IMR-90 (cell line): ENCODE measurements at regions of chr16 and their contacts with region 1.

Region 1: DNA sequence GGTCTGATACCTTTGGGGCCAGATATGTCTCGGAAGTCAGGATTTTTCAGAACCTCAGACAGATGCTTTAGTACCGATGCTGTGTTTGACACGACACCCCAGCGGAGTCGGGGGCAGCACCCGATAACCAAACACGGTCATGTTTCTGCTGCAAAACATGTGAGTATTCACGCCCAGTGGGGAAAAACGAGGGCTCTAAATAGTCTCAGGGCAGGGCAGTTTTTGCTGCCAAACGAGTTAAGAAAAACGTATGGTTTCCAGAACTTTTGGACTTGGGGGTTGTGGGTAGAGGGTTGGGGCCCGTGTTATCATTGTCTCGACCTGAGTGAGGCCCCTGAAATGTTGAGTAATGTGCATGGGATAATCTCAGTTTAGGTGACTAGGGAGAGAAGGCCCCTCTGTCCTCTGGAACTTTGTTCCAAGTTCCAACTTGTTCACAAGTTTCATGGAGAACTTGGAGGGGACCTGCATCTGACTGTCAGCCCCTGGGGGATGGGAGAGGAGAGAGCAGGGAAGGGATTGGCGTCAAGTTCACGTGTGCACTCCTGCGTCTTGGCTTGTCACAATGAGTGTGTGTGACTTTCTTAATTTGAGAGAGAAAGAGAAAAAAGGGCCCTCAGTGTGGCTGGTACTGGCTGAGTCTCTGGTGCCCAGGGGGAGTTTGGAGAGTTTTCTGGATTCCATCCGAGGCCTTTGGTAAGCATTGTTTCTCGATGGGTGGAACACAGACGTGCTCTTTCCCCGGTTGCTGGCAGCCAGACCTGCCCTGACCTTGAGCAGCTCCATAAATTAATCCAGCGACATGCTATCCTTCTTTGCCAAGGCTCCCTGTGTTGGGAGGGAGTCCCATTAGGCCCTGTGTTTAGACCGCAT is 83.9 kb upstream of the CIBAR2 start:
- DNase-seq: no peak
- ATAC-seq: no peak
- H3K4me3 ChIP-seq: no peak overlapping the region
- H3K27ac ChIP-seq: no peak overlapping the region
- H3K4me1 ChIP-seq: peaks cover 63% of the 10 kb centered on the region
- H3K27me3 ChIP-seq: no peaks in the 10 kb centered on the region
- CTCF ChIP-seq: no peak
- POLR2A ChIP-seq: no peak
- RAD21 ChIP-seq: no peak

Region 2: DNA sequence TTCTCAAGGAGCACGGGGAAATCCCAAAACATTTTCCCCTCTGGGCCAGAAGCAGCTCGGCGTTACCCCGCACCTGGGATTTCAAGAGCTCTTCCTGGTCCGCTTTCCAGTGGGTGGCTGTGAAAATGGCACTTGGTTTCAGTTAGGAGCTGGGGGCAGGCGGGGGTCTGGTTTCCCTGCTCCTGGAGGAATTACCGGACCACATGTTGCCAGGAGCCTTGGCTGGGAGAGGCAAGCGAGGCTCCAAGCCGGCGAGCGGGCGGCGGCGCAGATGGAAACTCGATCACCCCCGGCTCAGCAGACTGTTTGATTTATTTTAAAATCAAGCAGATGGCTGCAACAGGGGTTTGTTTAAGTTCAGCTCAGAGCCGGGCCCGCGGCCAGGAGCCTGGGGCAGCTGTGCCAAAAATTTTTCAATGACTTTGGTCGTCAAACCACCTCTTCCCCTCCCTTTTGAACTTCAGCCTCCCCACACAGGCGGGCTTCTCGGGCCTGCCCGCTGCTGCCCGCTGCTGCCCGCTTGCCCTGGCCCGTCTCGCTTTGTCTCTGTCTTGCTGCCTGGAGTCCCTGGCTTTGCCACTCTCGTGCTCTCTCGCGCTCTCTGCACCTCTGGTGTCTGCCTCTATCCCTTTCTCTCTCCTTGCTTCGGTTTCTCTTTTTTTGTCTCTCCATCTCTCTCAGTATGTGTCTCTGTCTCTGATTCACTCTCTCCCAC is 24.1 kb after region 1 on chr16:
- CTCF ChIA-PET with region 1: no interaction called
- POLR2A ChIA-PET with region 1: interaction called, 27 read pairs
- dilution Hi-C with region 1: no loop called
- in situ Hi-C with region 1: no loop called
- intact Hi-C with region 1: no loop called
- DNase-seq: peak; percentile 85
- ATAC-seq: peak; percentile 85
- H3K4me3 ChIP-seq: peak overlapping the region; percentile 2; the same call in 1 of the 2 replicates
- H3K27ac ChIP-seq: peak overlapping the region; percentile 93
- H3K4me1 ChIP-seq: peaks cover 34% of the 10 kb centered on the region
- H3K27me3 ChIP-seq: no peaks in the 10 kb centered on the region
- CTCF ChIP-seq: no peak
- POLR2A ChIP-seq: no peak
- RAD21 ChIP-seq: no peak

Region 3: GRCh38 chr16:85234310-85235204 is 38.4 kb after region 1 on chr16:
- CTCF ChIA-PET with region 1: no interaction called
- POLR2A ChIA-PET with region 1: no interaction called
- dilution Hi-C with region 1: no loop called
- in situ Hi-C with region 1: no loop called
- intact Hi-C with region 1: loop called (anchors 5 kb)
- DNase-seq: peak; percentile 85
- ATAC-seq: peak; percentile 70
- H3K4me3 ChIP-seq: peak overlapping the region; percentile 41; the same call in 1 of the 2 replicates
- H3K27ac ChIP-seq: peak overlapping the region; percentile 87
- H3K4me1 ChIP-seq: peaks cover 48% of the 10 kb centered on the region
- H3K27me3 ChIP-seq: no peaks in the 10 kb centered on the region
- CTCF ChIP-seq: no peak
- POLR2A ChIP-seq: no peak
- RAD21 ChIP-seq: peak; percentile 12; the same call in 1 of the 2 replicates